ENCODE measurements at regions of chr17 and their contacts with region 1.

Region 1: GRCh38 chr17:82751571-82752370 is at the start of gene TBCD:
- DNase-seq: peak; percentile 30 to 91
- H3K4me3 ChIP-seq: peak within 1 kb of the TSS; percentile 92 to 98
- H3K27ac ChIP-seq: peak within 1 kb of the TSS; percentile 81 to 91
- H3K4me1 ChIP-seq: peaks cover 7 to 18% of the 10 kb centered on the region in 2 donors
- H3K27me3 ChIP-seq: no peaks in the 10 kb centered on the region
- CTCF ChIP-seq: no peak
- total RNA-seq, gene TBCD: 156 TPM

Region 2: DNA sequence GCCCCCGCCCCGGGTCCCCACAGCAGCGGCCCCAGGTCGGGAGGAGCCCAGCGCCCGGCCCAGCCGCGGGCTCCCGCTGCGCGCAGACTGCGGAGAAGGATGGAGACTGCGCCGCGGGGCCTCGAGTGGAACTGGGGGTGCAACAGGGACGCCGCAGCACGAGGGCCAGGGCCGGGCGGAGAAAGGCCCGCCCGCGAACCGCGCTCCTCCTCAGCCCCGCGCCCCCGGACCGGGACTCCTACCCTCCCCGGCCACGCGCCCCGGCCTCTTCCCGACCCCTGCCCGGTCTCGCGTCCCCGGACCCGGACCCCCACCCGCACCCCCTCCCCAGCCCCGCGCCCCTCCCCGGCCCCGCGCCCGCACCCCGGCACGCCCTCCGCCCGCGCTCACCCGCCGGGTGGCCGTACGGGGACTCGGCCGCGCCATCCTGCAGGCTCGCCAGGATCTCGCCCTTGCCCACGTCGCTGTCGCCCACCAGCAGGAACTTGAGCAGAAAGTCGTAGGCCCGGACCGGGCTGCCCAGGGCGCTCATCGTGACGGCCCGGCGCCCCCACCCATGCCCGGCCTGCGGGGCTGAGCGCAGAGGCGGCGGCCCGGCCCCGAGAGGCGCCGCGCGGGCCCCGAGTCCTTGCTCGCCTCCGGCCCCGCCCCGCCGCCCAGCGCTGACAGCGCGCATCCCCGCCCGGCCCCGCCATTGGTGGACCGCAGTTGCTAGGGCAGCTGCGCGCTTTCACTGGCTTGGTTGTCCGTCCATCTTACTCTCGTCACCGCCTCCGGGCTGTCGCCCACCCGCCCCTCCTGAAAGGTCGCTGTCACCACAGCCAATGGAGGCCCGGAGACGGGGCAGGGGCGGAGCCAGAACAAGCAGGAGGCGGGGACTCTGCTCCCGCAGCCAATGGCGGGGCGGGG is 53.5 kb before region 1 on chr17 and contains the start of gene RAB40B:
- intact Hi-C with region 1: loop called (anchors 2 kb)
- DNase-seq: peak; percentile 98 to 100
- H3K4me3 ChIP-seq: peak within 1 kb of the TSS; percentile 71 to 99
- H3K27ac ChIP-seq: peak within 1 kb of the TSS in 1 of 2 donors; percentile 65
- H3K4me1 ChIP-seq: peaks cover 10 to 11% of the 10 kb centered on the region in 2 donors
- H3K27me3 ChIP-seq: no peaks in the 10 kb centered on the region
- CTCF ChIP-seq: no peak
- total RNA-seq, gene RAB40B: 9.4 TPM

Region 3: GRCh38 chr17:82716203-82717010 is 35.4 kb before region 1 on chr17 and contains the start of gene FN3KRP:
- intact Hi-C with region 1: loop called (anchors 1 kb)
- DNase-seq: peak; percentile 78 to 96
- H3K4me3 ChIP-seq: peak within 1 kb of the TSS; percentile 80 to 94
- H3K27ac ChIP-seq: peak within 1 kb of the TSS; percentile 46 to 55
- H3K4me1 ChIP-seq: peaks cover 4 to 9% of the 10 kb centered on the region in 2 donors
- H3K27me3 ChIP-seq: no peaks in the 10 kb centered on the region
- CTCF ChIP-seq: no peak
- total RNA-seq, gene FN3KRP: 21.0 TPM

Region 4: GRCh38 chr17:82737967-82738877 is 13.5 kb before region 1 on chr17:
- intact Hi-C with region 1: loop called (anchors 2 kb)
- DNase-seq: no peak
- H3K4me3 ChIP-seq: no peak overlapping the region
- H3K27ac ChIP-seq: no peak overlapping the region
- H3K4me1 ChIP-seq: peaks cover 0 to 9% of the 10 kb centered on the region in 2 donors
- H3K27me3 ChIP-seq: no peaks in the 10 kb centered on the region
- CTCF ChIP-seq: no peak